Sciatic nerve (tissue), 2 donors: ENCODE measurements at regions of chr1 and their contacts with region 1.

Region 1: DNA sequence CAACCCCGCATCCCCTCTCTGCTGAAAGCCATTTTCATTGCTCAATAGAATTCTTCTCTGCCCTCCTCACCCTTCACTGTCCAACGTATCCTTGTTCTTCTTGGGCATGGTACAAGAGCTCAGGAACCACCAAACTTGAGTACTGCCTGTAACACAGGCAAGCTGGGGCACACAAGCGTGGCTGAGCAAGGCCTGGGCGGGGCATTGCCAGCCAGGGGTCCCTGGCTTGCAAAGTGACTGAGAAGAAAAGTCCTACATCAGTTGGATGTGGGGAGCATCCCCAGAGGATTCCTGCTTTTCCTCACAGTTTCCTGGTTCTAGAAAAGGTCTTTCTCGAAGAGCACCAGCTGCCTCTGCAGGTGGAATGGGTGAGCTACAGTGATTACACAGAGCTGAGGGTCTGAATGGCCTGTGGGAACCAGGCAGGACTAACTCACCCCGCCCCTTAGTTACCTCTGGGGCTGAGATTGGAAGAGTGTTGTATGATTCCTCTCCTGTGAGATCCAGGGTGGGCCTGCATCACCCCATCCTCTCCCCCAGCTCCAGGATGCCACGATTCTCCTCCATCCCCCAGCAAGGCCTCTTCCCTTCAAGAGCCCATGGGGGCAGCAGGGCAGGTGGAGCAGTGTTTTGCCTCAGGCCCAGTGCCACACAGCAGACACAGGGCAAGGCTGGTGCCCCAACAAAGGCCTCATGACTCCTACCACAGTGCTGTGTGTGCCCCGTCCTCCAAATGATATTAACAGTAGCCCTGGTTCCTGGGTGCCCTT is 121.9 kb downstream of the MATN1 start:
- DNase-seq: no peak
- ATAC-seq: no peak

Region 2: DNA sequence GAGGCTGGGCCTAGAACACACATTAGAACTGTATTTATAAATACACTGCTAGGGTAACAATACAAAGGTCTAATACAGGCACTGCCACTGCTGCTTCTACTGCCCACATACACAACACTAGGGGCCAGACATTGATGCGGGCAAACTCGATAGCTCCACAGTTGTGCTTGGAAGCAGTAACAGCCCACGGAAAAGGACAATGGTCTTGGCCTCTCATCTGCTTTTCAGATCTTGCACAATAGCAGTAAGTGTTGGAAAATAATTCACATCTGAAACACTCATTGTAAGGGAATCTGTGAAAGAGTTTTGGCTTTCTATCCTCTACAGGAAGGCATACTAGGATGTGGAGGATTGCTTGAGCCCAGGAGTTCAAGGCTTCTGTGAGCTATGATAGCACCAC is 1221.3 kb after region 1 on chr1:
- intact Hi-C with region 1: loop called (anchors 10 kb)
- DNase-seq: no peak
- ATAC-seq: peak; percentile 55